Posterior vena cava (tissue), 2 donors: ENCODE measurements at regions of chr1 and their contacts with region 1.

Region 1: GRCh38 chr1:93414749-93415148 is 33.2 kb upstream of the FNBP1L start:
- DNase-seq: no peak

Region 2: GRCh38 chr1:93328809-93329760 is 85.7 kb before region 1 on chr1:
- intact Hi-C with region 1: loop called in 1 of 2 experiments (anchors 2 kb)
- DNase-seq: no peak

Region 3: DNA sequence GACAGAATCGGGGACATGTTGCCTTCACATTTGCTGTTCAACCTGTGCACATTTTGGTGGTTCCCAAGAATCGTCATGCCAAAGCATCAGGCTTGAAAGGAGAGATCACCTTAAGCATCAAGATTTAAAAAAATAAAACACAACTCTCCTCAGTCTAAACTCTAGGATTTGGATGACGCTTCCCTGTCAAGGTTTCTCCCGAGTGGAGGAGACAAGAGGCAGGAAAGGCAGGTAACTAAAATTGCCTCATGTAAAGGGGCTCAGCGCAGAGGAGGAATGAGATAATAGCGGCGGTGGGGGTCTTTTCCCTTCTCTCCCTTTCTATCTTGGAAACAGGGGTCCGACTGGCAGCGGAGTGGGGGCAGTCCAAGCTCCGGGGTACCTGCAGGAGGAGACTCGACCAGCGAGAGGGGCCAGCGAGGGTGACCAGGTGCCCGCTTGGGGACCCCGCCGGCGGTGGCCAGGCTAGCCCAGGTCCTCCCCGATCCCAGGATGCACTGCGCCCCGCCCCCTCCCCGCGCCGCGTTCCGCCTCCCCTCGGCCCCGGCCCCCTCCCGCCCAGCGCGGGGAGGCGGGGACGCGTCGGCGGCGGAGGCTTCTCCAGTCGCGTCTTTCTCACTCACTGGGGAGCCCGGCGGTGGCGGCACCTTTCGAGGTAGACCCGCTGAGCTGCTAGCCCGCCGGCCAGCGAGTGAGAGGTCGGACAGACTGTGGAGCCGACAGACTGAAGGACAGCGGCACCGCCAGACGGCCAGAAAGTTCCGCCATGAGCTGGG is 33.0 kb after region 1 on chr1 and contains the start of gene FNBP1L:
- intact Hi-C with region 1: no loop called
- DNase-seq: peak; percentile 89
- total RNA-seq, gene FNBP1L: 9.3 to 11.3 TPM